ENCODE measurements at regions of chr20 and their contacts with region 1.

Region 1: DNA sequence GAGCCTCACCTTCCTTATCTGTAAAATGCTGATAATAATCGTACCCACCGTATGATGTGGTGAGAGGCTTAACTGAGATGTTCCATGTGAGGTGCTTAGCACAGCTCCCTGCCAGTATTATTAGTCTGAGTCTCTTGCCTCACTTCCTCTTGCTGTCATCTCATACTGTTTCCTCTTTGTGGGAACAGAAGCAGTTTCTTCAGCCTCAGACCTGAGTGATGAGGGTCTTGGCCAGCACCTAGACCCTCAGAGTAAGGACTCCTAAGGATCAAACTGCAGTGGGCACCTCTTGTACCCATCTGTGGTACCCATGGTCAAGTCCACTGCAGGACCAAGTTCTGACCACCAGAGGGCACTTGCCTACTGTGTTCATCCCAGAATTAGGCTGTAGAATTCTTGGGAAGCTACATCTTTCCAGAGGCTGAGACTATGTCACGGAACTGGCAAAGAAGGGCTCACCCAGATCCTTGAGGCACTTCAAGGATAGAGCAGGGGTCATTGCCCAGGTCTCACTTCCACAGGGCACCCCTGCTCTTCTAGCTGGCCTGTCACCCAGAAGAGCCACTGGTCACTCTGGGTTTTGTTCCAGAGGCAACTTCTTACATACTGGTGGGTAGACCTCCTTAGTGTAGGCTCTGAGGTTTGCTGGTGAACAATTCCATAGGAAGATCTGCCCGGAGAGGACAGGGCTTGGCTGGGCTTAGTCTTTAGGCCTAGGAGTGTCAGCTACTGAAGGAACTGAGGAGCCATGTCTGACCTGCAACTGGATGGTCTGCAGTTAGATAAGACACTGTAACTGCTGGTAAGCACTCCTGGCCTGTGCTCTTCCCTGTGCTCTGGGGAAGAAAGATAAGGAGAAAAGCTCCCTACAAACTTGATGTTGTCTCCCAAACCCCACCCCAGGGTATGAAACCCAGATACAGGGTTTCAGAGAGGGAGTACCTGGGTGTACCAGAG is 20.6 kb upstream of the SGK2 start:
- DNase-seq: peak; percentile 74
- ATAC-seq: peak; percentile 67
- H3K4me3 ChIP-seq: no peak overlapping the region
- H3K27ac ChIP-seq: no peak overlapping the region
- H3K4me1 ChIP-seq: peaks cover 45% of the 10 kb centered on the region
- H3K27me3 ChIP-seq: no peaks in the 10 kb centered on the region; a peak in 1 of 5 replicates
- CTCF ChIP-seq: peak; percentile 99
- EP300 ChIP-seq: no peak
- POLR2A ChIP-seq: no peak
- RAD21 ChIP-seq: peak; percentile 97

Region 2: GRCh38 chr20:43549416-43550065 is 11.3 kb after region 1 on chr20:
- CTCF ChIA-PET with region 1: no interaction called
- POLR2A ChIA-PET with region 1: interaction called, 224 read pairs
- in situ Hi-C with region 1: no loop called
- intact Hi-C with region 1: no loop called
- DNase-seq: no peak
- ATAC-seq: no peak
- H3K4me3 ChIP-seq: no peak overlapping the region
- H3K27ac ChIP-seq: no peak overlapping the region
- H3K4me1 ChIP-seq: peaks cover 68% of the 10 kb centered on the region
- H3K27me3 ChIP-seq: no peaks in the 10 kb centered on the region
- CTCF ChIP-seq: 0 out of 2 replicates have a peak, but pooled peaks have one; percentile 8
- EP300 ChIP-seq: no peak
- POLR2A ChIP-seq: no peak
- RAD21 ChIP-seq: no peak

Region 3: GRCh38 chr20:43691928-43692524 is 153.8 kb after region 1 on chr20:
- CTCF ChIA-PET with region 1: interaction called, 39 read pairs
- POLR2A ChIA-PET with region 1: interaction called, 4 read pairs
- in situ Hi-C with region 1: loop called (anchors 5 kb)
- intact Hi-C with region 1: loop called (anchors 1 kb)
- DNase-seq: peak; percentile 72
- ATAC-seq: peak; percentile 92
- H3K4me3 ChIP-seq: no peak overlapping the region
- H3K27ac ChIP-seq: no peak overlapping the region
- H3K4me1 ChIP-seq: no peaks in the 10 kb centered on the region
- H3K27me3 ChIP-seq: no peaks in the 10 kb centered on the region
- CTCF ChIP-seq: peak; percentile 93
- EP300 ChIP-seq: no peak
- POLR2A ChIP-seq: no peak
- RAD21 ChIP-seq: peak; percentile 93

Measured in HepG2 (cell line).